ENCODE measurements at regions of chr7 and their contacts with region 1.

Region 1: DNA sequence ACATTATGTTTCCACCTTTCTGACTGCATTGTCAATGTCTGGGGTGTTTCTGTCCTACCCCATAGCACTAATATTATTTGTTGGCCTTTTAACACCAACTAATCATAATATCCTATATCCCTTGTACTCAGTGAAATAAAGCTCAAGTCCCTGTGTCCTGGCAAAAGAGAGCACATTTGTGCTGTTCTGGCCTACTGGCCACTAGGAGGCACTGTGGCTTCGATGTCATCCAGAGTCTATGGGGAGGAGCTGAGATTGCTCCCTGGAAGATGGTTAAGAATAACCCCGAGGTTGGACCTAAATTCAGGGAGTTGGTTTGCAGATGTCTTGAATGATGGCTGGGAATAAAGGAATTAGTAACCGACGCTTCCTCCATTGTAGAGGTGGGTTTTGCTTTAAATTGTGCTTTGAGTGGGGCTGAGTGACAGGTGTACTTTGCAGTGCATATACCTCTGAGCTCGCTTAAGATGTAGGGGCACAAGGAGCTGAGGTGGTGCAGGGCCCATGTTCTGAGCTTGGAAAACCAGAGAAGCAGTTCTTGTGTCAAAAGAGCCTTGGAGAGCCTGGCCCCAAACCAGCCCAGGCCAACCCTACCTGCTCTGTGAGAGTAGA is 191.2 kb upstream of the PRSS1 start:
- DNase-seq: peak; percentile 69
- H3K4me3 ChIP-seq: no peak overlapping the region
- H3K27ac ChIP-seq: no peak overlapping the region; the same call in 1 of the 2 replicates
- H3K4me1 ChIP-seq: peaks cover 76% of the 10 kb centered on the region
- H3K27me3 ChIP-seq: no peaks in the 10 kb centered on the region

Region 2: GRCh38 chr7:143490717-143491306 is 932.7 kb after region 1 on chr7:
- in situ Hi-C with region 1: loop called (anchors 25 kb)
- DNase-seq: peak; percentile 58
- H3K4me3 ChIP-seq: no peak overlapping the region
- H3K27ac ChIP-seq: no peak overlapping the region
- H3K4me1 ChIP-seq: peaks cover 55% of the 10 kb centered on the region
- H3K27me3 ChIP-seq: no peaks in the 10 kb centered on the region